Activated CD4-positive, alpha-beta memory T cell treated with anti-CD3 and anti-CD28 coated beads, Interleukin-2, amount 10 ng/mL, durations not matched to agents 7 days and 5 days (primary cell): ENCODE measurements at regions of chr17 and their contacts with region 1.

Region 1: GRCh38 chr17:78822552-78822951 is 18.1 kb downstream of the USP36 start:
- DNase-seq: no peak
- H3K4me3 Mint-ChIP-seq: no peak overlapping the region
- H3K27ac Mint-ChIP-seq: peak overlapping the region; percentile 38
- H3K4me1 Mint-ChIP-seq: peaks cover 54% of the 10 kb centered on the region
- H3K27me3 Mint-ChIP-seq: no peaks in the 10 kb centered on the region

Region 2: DNA sequence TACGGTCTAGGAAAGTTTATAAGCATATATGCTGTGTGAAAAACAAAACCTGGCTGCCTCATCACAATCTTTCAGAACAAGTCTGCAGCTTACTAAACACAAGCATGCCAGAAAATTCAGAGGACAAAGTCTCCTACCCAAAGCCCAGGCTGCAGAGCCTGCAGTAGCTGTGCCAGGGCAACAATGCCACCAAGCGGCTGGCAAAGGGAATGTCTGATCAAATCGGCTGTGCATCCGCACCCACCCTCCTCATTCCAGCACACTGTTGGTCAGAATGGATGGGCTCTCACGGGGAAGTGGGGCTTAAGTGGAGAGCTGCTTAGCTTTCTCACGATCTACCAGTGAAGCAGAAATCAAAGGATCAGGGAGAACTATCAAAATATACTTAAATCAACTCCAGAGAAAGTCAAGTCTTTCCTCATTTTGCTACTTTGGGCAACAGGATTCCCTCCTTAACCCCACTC is 114.0 kb before region 1 on chr17:
- CTCF ChIA-PET with region 1: interaction called, 18 read pairs
- POLR2A ChIA-PET with region 1: interaction called, 12 read pairs
- DNase-seq: peak; percentile 68
- H3K4me3 Mint-ChIP-seq: peak overlapping the region; percentile 29
- H3K27ac Mint-ChIP-seq: peak overlapping the region; percentile 80
- H3K4me1 Mint-ChIP-seq: peaks cover 68% of the 10 kb centered on the region
- H3K27me3 Mint-ChIP-seq: no peaks in the 10 kb centered on the region

Region 3: GRCh38 chr17:78774956-78775571 is 47.5 kb before region 1 on chr17:
- CTCF ChIA-PET with region 1: interaction called, 6 read pairs
- POLR2A ChIA-PET with region 1: interaction called, 32 read pairs
- DNase-seq: peak; percentile 82
- H3K4me3 Mint-ChIP-seq: peak overlapping the region; percentile 78
- H3K27ac Mint-ChIP-seq: peak overlapping the region; percentile 96
- H3K4me1 Mint-ChIP-seq: peaks cover 65% of the 10 kb centered on the region
- H3K27me3 Mint-ChIP-seq: no peaks in the 10 kb centered on the region

Region 4: GRCh38 chr17:78781948-78782916 is 40.3 kb before region 1 on chr17 and contains the start of gene CYTH1:
- CTCF ChIA-PET with region 1: interaction called, 6 read pairs
- POLR2A ChIA-PET with region 1: interaction called, 37 read pairs
- DNase-seq: peak; percentile 98
- H3K4me3 Mint-ChIP-seq: peak within 1 kb of the TSS; percentile 85
- H3K27ac Mint-ChIP-seq: peak within 1 kb of the TSS; percentile 98
- H3K4me1 Mint-ChIP-seq: peaks cover 56% of the 10 kb centered on the region
- H3K27me3 Mint-ChIP-seq: no peaks in the 10 kb centered on the region
- total RNA-seq, gene CYTH1: 288 to 309 TPM

Region 5: GRCh38 chr17:78840725-78841611 is 18.4 kb after region 1 on chr17 and contains the start of gene USP36:
- CTCF ChIA-PET with region 1: interaction called, 3 read pairs
- POLR2A ChIA-PET with region 1: interaction called, 19 read pairs
- DNase-seq: peak; percentile 100
- H3K4me3 Mint-ChIP-seq: peak within 1 kb of the TSS; percentile 94
- H3K27ac Mint-ChIP-seq: peak within 1 kb of the TSS; percentile 94
- H3K4me1 Mint-ChIP-seq: peaks cover 55% of the 10 kb centered on the region
- H3K27me3 Mint-ChIP-seq: no peaks in the 10 kb centered on the region
- total RNA-seq, gene USP36: 95.4 to 96.8 TPM